SK-N-SH (cell line): ENCODE measurements at regions of chr1 and their contacts with region 1.

Region 1: GRCh38 chr1:158203693-158204457 is 23.2 kb downstream of the CD1D start:
- DNase-seq: peak; percentile 40
- H3K4me3 ChIP-seq: no peak overlapping the region
- H3K27ac ChIP-seq: no peak overlapping the region
- H3K4me1 ChIP-seq: no peaks in the 10 kb centered on the region
- H3K27me3 ChIP-seq: peaks cover 6% of the 10 kb centered on the region
- CTCF ChIP-seq: peak; percentile 89
- EP300 ChIP-seq: no peak
- RAD21 ChIP-seq: peak; percentile 63

Region 2: GRCh38 chr1:158177700-158178450 is 26.0 kb before region 1 on chr1:
- CTCF ChIA-PET with region 1: interaction called, 11 read pairs
- POLR2A ChIA-PET with region 1: no interaction called
- DNase-seq: peak; percentile 54
- H3K4me3 ChIP-seq: peak overlapping the region; percentile 31 to 47; a peak in 3 of 4 replicates
- H3K27ac ChIP-seq: no peak overlapping the region
- H3K4me1 ChIP-seq: no peaks in the 10 kb centered on the region; a peak in 1 of 4 replicates
- H3K27me3 ChIP-seq: peaks cover 61% of the 10 kb centered on the region
- CTCF ChIP-seq: no peak
- EP300 ChIP-seq: no peak
- RAD21 ChIP-seq: no peak

Region 3: DNA sequence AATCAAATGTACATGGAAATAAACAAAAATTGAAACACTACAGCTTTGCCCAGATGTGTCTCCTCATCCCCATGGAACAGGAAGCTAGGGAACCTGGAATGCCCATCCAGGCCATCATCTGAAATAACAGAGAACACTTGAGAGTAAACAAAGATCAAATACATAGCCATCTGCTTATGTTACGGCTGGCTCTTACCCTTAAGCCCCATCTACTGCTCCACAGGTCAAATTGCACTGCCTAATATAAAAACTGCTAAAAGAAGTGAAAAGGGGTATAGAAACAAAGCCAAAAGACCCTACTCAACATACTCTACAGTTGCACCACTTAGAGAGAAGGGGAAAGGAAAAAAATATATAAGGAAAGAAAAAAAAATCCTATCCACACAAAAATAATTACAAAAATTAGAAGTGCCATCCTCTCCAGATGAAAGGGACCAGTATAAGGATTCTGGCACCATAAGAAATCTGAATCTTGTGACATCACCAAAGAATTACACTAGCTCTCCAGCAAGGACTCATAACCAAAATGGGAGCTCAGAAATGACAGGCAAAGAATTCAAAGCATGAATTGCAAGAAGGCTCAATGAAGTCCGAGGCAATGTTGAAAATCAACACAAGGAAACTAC is 323.4 kb after region 1 on chr1:
- CTCF ChIA-PET with region 1: interaction called, 11 read pairs
- POLR2A ChIA-PET with region 1: no interaction called
- DNase-seq: peak; percentile 1
- H3K4me3 ChIP-seq: no peak overlapping the region
- H3K27ac ChIP-seq: no peak overlapping the region
- H3K4me1 ChIP-seq: no peaks in the 10 kb centered on the region
- H3K27me3 ChIP-seq: no peaks in the 10 kb centered on the region; the same call in 1 of the 2 replicates
- CTCF ChIP-seq: peak; percentile 62
- EP300 ChIP-seq: no peak
- RAD21 ChIP-seq: peak; percentile 47; the same call in 1 of the 2 replicates

Region 4: DNA sequence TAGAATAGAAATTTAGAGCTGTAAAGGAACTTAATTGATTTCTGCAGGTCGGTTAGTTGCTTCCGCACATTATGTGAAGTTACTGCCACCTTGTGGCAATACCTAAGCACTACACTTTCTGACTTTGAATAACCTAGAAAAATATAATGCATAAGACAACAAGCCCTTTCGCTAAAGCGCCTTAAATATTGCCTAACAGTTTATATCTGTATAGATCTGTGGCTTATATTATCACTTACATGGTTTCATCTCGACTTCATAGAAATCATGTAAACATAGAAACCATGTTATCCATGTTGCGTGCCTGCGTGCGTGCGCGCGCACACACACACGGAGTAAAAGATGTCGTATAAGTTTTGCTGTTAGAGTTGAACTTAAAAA is 794.9 kb after region 1 on chr1:
- CTCF ChIA-PET with region 1: interaction called, 20 read pairs
- POLR2A ChIA-PET with region 1: no interaction called
- DNase-seq: peak; percentile 33
- H3K4me3 ChIP-seq: peak overlapping the region; percentile 55 to 71
- H3K27ac ChIP-seq: peak overlapping the region; percentile 91 to 97
- H3K4me1 ChIP-seq: peaks cover 0 to 6% of the 10 kb centered on the region in 2 experiments; a peak in 3 of 4 replicates
- H3K27me3 ChIP-seq: no peaks in the 10 kb centered on the region
- CTCF ChIP-seq: peak; percentile 99
- EP300 ChIP-seq: no peak
- RAD21 ChIP-seq: peak; percentile 79